ENCODE measurements at regions of chr21 and their contacts with region 1.

Region 1: DNA sequence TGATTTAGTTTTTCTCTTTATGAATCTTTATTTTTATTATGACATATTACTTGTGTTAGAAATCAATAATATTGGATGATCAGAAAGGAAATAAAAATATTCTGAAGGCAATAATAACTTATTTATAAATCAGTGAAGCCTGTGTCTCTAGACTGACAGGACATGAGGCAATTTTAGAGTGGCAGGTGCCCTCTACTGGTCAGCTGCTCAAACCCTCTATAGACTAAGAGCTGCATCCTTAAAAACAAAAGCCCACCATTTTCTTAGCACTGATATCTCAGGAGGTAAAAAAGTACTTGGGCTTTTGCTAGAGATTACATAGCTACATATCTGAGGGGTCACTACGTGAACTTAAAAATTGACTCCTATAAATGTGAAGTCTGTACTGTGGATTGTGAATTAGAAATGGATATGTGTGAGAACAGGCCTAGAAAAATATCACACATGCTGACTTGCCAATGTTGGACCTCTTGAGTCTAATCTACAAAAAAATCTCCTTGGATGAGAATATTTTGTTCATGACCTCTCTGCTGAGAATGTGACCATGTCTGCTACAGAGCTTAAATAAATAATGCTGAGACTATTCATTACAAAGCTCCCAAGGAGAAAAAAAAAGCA is 597.9 kb upstream of the ADAMTS5 start:
- H3K4me3 Mint-ChIP-seq: no peak overlapping the region
- H3K27ac Mint-ChIP-seq: no peak overlapping the region
- H3K4me1 Mint-ChIP-seq: no peaks in the 10 kb centered on the region
- H3K27me3 Mint-ChIP-seq: no peaks in the 10 kb centered on the region

Region 2: GRCh38 chr21:26850108-26850643 is 714.6 kb before region 1 on chr21:
- intact Hi-C with region 1: loop called (anchors 1 kb)
- H3K4me3 Mint-ChIP-seq: no peak overlapping the region
- H3K27ac Mint-ChIP-seq: no peak overlapping the region
- H3K4me1 Mint-ChIP-seq: peaks cover 22% of the 10 kb centered on the region
- H3K27me3 Mint-ChIP-seq: peaks cover 32% of the 10 kb centered on the region

Region 3: GRCh38 chr21:27487676-27488075 is 77.1 kb before region 1 on chr21:
- intact Hi-C with region 1: no loop called
- H3K4me3 Mint-ChIP-seq: no peak overlapping the region
- H3K27ac Mint-ChIP-seq: no peak overlapping the region
- H3K4me1 Mint-ChIP-seq: no peaks in the 10 kb centered on the region
- H3K27me3 Mint-ChIP-seq: no peaks in the 10 kb centered on the region

Region 4: DNA sequence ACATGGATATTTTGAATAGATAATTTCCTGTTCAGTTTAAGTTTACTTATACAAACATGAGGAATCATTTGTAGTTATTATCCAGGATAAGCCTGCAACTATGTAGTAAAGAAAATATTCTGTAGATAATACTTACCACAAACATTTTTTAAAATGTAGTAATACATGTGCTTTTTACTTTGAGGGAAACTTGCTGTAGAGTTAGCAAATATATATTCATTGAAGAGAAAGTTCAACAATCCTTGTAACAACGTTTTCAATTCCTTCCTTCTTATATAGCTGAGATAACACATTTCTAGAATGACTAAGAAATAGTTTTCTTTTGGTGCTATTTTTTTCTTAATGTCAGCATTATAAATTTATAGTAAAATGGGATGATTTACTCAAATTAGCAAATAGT is 66.7 kb after region 1 on chr21:
- intact Hi-C with region 1: no loop called
- H3K4me3 Mint-ChIP-seq: no peak overlapping the region
- H3K27ac Mint-ChIP-seq: no peak overlapping the region
- H3K4me1 Mint-ChIP-seq: no peaks in the 10 kb centered on the region
- H3K27me3 Mint-ChIP-seq: no peaks in the 10 kb centered on the region

Measured in dendritic cell treated with granulocyte-macrophage colony-stimulating factor and Interleukin-4, amounts not matched to agents 40 ng/mL and 50 ng/mL, for 4 days (primary cell).